CD4-positive, alpha-beta T cell (primary cell): ENCODE measurements at regions of chr22 and their contacts with region 1.

Region 1: DNA sequence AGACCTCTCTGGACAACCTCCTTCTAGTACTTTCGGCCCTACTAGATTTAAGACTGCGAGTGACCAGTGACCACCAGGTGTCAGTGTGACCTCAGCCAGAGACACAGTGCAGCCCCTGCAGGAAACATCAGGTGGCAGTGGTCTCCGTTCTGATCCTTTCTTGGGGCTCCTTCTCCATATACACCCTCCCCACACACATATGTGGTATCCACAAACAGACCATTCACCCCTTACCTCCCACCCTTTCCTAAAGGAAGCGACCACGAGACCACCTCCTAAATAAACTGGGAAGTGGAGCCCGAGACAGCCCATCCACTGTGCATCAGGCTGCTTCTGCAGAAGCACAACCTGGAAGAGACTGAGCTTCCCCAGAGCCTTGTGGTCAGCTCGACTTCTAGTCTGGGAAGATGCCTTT is 38.5 kb upstream of the CYP2D6 start:
- DNase-seq: peak; percentile 57 to 86 (median 72)
- ATAC-seq: peak; percentile 93
- H3K4me3 ChIP-seq: no peak overlapping the region
- H3K4me3 Mint-ChIP-seq: no peak overlapping the region
- H3K27ac ChIP-seq: no peak overlapping the region
- H3K27ac Mint-ChIP-seq: no peak overlapping the region
- H3K4me1 ChIP-seq: peaks cover 13% of the 10 kb centered on the region
- H3K4me1 Mint-ChIP-seq: peaks cover 34% of the 10 kb centered on the region
- H3K27me3 ChIP-seq: no peaks in the 10 kb centered on the region
- H3K27me3 Mint-ChIP-seq: no peaks in the 10 kb centered on the region
- CTCF ChIP-seq: peak; percentile 71

Region 2: GRCh38 chr22:41557401-41558240 is 611.4 kb before region 1 on chr22:
- CTCF ChIA-PET with region 1: no interaction called
- POLR2A ChIA-PET with region 1: no interaction called
- intact Hi-C with region 1: no loop called
- DNase-seq: peak in 2 of 14 experiments; percentile 6 to 11
- ATAC-seq: no peak
- H3K4me3 ChIP-seq: no peak overlapping the region
- H3K4me3 Mint-ChIP-seq: no peak overlapping the region
- H3K27ac ChIP-seq: no peak overlapping the region
- H3K27ac Mint-ChIP-seq: no peak overlapping the region
- H3K4me1 ChIP-seq: no peaks in the 10 kb centered on the region
- H3K4me1 Mint-ChIP-seq: no peaks in the 10 kb centered on the region
- H3K27me3 ChIP-seq: peaks cover 18 to 20% of the 10 kb centered on the region in 2 experiments
- H3K27me3 Mint-ChIP-seq: peaks cover 25% of the 10 kb centered on the region
- CTCF ChIP-seq: no peak

Region 3: GRCh38 chr22:42199025-42199424 is 30.0 kb after region 1 on chr22:
- CTCF ChIA-PET with region 1: no interaction called
- POLR2A ChIA-PET with region 1: no interaction called
- intact Hi-C with region 1: no loop called
- DNase-seq: no peak
- ATAC-seq: no peak
- H3K4me3 ChIP-seq: no peak overlapping the region
- H3K4me3 Mint-ChIP-seq: no peak overlapping the region
- H3K27ac ChIP-seq: no peak overlapping the region
- H3K27ac Mint-ChIP-seq: no peak overlapping the region
- H3K4me1 ChIP-seq: peaks cover 62% of the 10 kb centered on the region
- H3K4me1 Mint-ChIP-seq: peaks cover 90% of the 10 kb centered on the region
- H3K27me3 ChIP-seq: no peaks in the 10 kb centered on the region
- H3K27me3 Mint-ChIP-seq: no peaks in the 10 kb centered on the region
- CTCF ChIP-seq: no peak

Region 4: GRCh38 chr22:42473484-42474193 is 304.6 kb after region 1 on chr22:
- CTCF ChIA-PET with region 1: no interaction called
- POLR2A ChIA-PET with region 1: no interaction called
- intact Hi-C with region 1: loop called in 1 of 2 experiments (anchors 1 kb)
- DNase-seq: peak in 4 of 14 experiments; percentile 15 to 63 (median 50)
- ATAC-seq: peak; percentile 63
- H3K4me3 ChIP-seq: no peak overlapping the region
- H3K4me3 Mint-ChIP-seq: no peak overlapping the region
- H3K27ac ChIP-seq: no peak overlapping the region
- H3K27ac Mint-ChIP-seq: no peak overlapping the region
- H3K4me1 ChIP-seq: peaks cover 8% of the 10 kb centered on the region
- H3K4me1 Mint-ChIP-seq: peaks cover 5% of the 10 kb centered on the region
- H3K27me3 ChIP-seq: no peaks in the 10 kb centered on the region
- H3K27me3 Mint-ChIP-seq: no peaks in the 10 kb centered on the region
- CTCF ChIP-seq: peak; percentile 75